Activated CD4-positive, alpha-beta memory T cell treated with anti-CD3 and anti-CD28 coated beads, Interleukin-2, amount 10 ng/mL, durations not matched to agents 7 days and 5 days (primary cell): ENCODE measurements at regions of chr1 and their contacts with region 1.

Region 1: GRCh38 chr1:155934097-155934935 is at the start of gene KHDC4:
- DNase-seq: peak; percentile 97
- H3K4me3 Mint-ChIP-seq: no peak within 1 kb of the TSS
- H3K27ac Mint-ChIP-seq: no peak within 1 kb of the TSS
- H3K4me1 Mint-ChIP-seq: peaks cover 45% of the 10 kb centered on the region
- H3K27me3 Mint-ChIP-seq: no peaks in the 10 kb centered on the region
- total RNA-seq, gene KHDC4: 63.8 to 71.4 TPM

Region 2: DNA sequence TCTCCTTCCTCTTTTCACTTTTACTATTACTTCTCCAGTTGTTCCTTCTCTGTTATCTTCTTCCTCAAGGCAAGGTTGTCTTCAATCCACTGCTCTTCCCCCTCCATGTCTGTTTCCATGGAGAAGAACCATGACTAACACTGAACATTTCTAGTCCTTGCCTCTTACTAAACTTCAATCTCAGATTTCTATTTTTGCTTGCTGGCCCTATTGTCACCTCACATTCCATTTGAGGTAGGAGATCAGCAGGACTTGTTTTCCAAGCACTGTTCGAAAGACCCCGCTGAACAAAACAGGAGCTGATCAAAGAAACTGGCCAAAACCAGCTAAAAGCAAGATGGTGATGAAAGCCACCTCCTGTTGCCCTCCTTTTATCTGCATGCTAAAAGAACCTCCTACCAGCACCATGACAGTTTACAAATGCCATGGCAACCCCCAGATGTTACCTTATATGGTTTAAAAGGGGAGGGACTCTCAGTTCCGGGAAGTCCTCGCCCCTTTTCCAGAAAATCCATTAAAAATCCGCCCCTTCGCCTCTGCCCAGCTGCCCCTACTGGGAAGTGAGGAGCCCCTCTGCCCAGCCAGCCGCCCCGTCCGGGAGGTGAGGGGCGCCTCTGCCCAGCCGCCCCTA is 99.9 kb before region 1 on chr1:
- CTCF ChIA-PET with region 1: no interaction called
- POLR2A ChIA-PET with region 1: no interaction called
- DNase-seq: no peak
- H3K4me3 Mint-ChIP-seq: no peak overlapping the region
- H3K27ac Mint-ChIP-seq: no peak overlapping the region
- H3K4me1 Mint-ChIP-seq: peaks cover 38% of the 10 kb centered on the region
- H3K27me3 Mint-ChIP-seq: no peaks in the 10 kb centered on the region

Region 3: DNA sequence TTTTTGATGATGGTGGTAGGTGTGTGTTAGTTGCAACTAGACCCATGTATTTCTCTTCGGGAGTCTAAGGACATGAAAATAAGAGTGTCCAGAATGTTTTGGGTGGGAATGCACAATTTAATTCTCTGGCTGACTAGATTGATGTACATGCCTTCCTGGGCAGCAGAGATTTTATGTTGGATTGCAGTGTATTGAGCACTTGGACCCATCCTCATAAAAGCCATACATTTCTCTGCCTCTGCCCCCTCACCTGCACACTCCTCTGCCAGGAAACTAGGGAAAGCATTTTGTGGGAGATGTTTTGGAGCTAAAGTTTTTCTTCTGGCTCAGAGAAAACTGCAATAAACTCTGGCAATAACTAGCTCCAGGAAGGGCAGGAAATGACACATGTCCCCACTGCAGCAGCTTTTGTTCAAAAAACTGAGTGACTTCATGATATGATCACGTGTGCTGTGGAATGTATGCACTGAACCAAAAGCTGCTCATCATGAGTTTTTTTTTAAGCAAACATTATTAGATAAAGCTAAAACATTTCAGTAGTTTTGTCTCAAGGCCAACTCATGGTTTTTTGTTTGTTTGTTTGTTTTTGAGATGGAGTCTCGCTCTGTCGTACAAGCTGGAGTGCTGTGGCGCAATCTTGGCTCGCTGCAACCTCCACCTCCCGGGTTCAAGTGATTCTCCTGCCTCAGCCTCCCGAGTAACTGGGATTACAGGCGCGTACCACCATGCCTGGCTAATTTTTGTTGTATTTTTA is 40.8 kb before region 1 on chr1:
- CTCF ChIA-PET with region 1: no interaction called
- POLR2A ChIA-PET with region 1: interaction called, 10 read pairs
- DNase-seq: peak; percentile 40
- H3K4me3 Mint-ChIP-seq: no peak overlapping the region
- H3K27ac Mint-ChIP-seq: peak overlapping the region; percentile 86
- H3K4me1 Mint-ChIP-seq: peaks cover 19% of the 10 kb centered on the region
- H3K27me3 Mint-ChIP-seq: no peaks in the 10 kb centered on the region

Region 4: DNA sequence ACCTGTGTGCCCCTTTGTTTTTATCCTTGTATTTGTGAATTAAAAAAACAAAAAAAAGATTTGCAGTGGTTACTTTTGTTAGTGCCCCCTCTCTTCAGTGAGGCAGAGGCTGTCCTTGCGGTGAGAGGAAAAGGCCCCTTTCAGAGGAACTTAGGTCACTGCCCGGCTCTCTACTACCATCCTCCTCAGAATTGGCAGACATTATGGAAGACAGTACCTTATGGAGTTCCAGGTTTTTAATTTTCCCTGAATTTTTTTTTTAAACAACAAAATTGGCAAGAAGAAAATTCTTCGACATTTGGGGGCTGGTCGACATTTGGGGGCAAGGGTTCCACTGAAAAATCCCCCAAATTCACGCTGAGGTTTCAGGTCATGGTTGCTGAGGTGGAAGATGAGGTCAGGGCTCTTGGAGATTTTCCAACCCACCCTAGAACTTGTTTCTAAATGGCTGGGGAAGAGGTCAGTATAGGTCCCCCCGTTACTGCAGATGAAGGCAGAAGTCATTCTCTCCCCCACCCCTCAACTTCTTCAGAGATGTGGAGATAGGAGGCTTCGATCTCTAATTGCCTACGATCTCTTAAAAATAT is 12.4 kb after region 1 on chr1:
- CTCF ChIA-PET with region 1: interaction called, 17 read pairs
- POLR2A ChIA-PET with region 1: interaction called, 67 read pairs
- DNase-seq: no peak
- H3K4me3 Mint-ChIP-seq: no peak overlapping the region
- H3K27ac Mint-ChIP-seq: peak overlapping the region; percentile 76
- H3K4me1 Mint-ChIP-seq: peaks cover 48% of the 10 kb centered on the region
- H3K27me3 Mint-ChIP-seq: no peaks in the 10 kb centered on the region

Region 5: DNA sequence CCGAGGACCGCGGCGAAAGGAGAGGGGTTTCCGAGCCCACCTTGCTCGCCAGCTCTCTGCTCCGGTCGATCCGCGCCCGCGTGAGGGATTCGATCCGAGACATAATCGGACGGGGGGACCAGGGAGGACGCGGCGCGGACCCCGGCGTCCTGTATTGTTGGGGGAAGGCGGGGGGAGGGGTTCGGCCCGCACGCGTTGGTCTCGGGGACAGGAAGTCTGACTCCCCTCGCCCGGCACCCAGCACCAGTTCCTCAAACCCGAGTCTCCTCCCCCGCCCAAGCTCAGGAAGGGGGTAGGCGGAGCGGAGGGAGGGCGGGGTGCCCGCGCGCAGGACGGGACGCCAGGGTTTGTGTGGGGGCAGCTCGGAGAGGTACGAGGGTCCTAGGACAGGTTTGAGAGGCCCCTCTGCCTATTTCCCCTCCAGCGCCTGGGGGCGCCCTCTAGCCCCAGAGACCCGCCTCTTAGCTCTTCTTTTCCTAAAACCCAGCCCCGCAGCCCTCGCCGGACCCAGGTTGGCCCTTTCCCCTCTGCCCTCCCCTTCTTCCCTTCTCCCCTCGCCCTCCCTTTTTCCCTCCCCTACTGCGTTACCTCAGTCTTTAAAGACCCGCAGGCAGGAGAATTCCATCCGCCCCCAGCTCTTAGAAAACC is 44.1 kb after region 1 on chr1 and contains the start of gene ARHGEF2:
- CTCF ChIA-PET with region 1: interaction called, 38 read pairs
- POLR2A ChIA-PET with region 1: interaction called, 68 read pairs
- DNase-seq: peak; percentile 84
- H3K4me3 Mint-ChIP-seq: peak within 1 kb of the TSS; percentile 100
- H3K27ac Mint-ChIP-seq: peak within 1 kb of the TSS; percentile 93
- H3K4me1 Mint-ChIP-seq: peaks cover 60% of the 10 kb centered on the region
- H3K27me3 Mint-ChIP-seq: no peaks in the 10 kb centered on the region
- total RNA-seq, gene ARHGEF2: 159 to 164 TPM

Region 6: DNA sequence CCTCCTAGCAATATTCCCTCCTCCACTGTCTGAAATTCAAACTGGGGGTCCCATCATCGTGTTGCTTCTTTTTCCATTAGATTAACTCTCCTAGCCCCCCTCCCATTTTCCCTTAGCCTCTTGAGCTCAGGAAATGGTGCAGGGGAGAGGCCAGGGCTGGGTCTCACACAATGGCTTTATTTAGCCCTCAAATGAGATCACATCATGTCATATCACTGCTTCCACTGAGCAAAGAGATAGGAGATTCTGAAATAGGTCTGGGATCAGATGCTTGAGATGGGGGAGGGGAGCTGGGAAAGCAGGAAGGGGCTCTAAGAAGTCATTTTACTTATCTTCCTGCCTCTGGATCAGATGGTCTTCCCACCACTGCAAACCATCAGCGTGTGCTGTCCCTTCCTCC is 61.9 kb after region 1 on chr1:
- CTCF ChIA-PET with region 1: interaction called, 65 read pairs
- POLR2A ChIA-PET with region 1: no interaction called
- DNase-seq: no peak
- H3K4me3 Mint-ChIP-seq: no peak overlapping the region
- H3K27ac Mint-ChIP-seq: no peak overlapping the region
- H3K4me1 Mint-ChIP-seq: peaks cover 7% of the 10 kb centered on the region
- H3K27me3 Mint-ChIP-seq: no peaks in the 10 kb centered on the region

Region 7: GRCh38 chr1:156065212-156065611 is 130.9 kb after region 1 on chr1:
- CTCF ChIA-PET with region 1: interaction called, 30 read pairs
- POLR2A ChIA-PET with region 1: interaction called, 5 read pairs
- DNase-seq: no peak
- H3K4me3 Mint-ChIP-seq: no peak overlapping the region
- H3K27ac Mint-ChIP-seq: no peak overlapping the region
- H3K4me1 Mint-ChIP-seq: peaks cover 18% of the 10 kb centered on the region
- H3K27me3 Mint-ChIP-seq: no peaks in the 10 kb centered on the region

Region 8: GRCh38 chr1:156226116-156226538 is 291.8 kb after region 1 on chr1:
- CTCF ChIA-PET with region 1: no interaction called
- POLR2A ChIA-PET with region 1: no interaction called
- DNase-seq: no peak
- H3K4me3 Mint-ChIP-seq: no peak overlapping the region
- H3K27ac Mint-ChIP-seq: peak overlapping the region; percentile 84
- H3K4me1 Mint-ChIP-seq: peaks cover 58% of the 10 kb centered on the region
- H3K27me3 Mint-ChIP-seq: no peaks in the 10 kb centered on the region